Activated B cell treated with CpG ODN at 0.5 μM for 24 hours (primary cell): ENCODE measurements at regions of chr2 and their contacts with region 1.

Region 1: DNA sequence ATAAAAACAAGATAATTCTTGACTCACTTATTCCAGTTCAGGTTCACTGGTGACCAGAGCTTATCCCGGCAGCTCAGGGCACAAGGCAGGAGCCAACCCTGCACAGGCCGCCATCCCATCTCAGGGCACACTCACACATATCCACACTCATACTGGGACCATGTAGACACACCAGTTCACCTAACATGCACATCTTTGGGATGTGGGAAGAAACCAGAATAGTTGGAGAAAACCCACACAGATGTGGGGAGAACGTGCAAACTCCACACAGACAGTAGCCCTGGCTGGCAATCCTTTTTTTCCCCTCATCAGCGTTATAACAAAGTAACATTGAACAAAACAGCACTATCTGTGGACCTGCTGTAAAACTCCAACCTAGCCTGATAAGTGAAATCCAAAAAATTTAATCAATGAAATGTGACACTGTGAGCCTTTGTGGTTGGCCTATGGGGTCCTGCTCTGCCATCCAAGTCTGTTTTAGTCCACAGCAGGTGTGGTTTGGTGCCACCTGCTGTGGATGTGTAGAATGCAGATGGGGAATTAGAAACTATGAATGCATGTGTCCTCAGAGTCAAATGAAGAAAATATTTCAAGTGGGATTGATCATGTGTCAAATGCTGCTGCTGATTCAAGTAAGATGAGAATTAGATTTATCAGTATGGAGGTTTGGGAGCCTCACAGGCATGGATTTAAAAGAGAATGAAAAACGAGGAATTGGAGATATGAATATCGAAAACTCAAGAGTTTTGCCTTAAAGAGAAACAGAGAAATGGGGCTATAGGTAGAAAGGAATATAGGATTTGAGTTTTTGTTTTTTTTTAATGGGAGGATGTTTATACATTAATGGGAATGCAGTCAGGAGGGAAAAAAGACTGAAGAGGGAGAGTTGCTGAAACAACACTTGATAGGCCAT is 47.0 kb downstream of the UGP2 start:
- DNase-seq: no peak
- ATAC-seq: peak; percentile 69
- H3K4me3 Mint-ChIP-seq: no peak overlapping the region
- H3K27ac Mint-ChIP-seq: no peak overlapping the region
- H3K4me1 Mint-ChIP-seq: no peaks in the 10 kb centered on the region
- H3K27me3 Mint-ChIP-seq: no peaks in the 10 kb centered on the region
- CTCF ChIP-seq: no peak

Region 2: DNA sequence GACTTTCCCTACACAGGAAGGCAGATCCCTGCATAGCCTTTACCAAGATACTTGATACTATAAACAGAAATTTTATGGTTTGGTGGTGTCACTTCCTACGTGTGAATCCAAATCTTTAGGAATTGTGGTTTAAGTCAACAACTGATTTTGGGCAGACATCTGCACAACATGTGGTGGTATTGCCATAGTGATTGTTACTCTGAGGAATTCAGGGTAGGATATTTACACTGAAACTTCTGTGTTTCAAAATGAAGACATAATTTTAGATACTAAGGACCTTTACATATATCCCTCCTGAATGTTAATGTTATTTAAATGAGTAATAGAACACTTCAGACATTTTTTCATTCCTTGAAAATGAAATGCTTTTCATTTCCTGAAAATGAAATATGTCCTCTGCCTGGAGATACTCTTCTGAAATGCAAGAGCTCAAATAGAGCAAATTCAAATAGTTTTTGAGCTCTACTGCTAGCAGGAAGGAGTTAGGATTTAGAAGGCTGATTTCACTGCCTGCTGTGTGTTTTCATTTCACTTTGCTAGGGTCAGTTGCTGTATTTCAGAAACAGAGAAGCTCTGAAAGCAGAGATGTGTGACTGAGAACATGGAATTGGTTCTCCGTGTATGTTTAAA is 222.8 kb before region 1 on chr2:
- CTCF ChIA-PET with region 1: no interaction called
- POLR2A ChIA-PET with region 1: no interaction called
- intact Hi-C with region 1: no loop called
- DNase-seq: no peak
- ATAC-seq: no peak
- H3K4me3 Mint-ChIP-seq: no peak overlapping the region
- H3K27ac Mint-ChIP-seq: no peak overlapping the region
- H3K4me1 Mint-ChIP-seq: no peaks in the 10 kb centered on the region
- H3K27me3 Mint-ChIP-seq: peaks cover 6% of the 10 kb centered on the region
- CTCF ChIP-seq: no peak

Region 3: GRCh38 chr2:63692002-63692606 is 196.6 kb before region 1 on chr2:
- CTCF ChIA-PET with region 1: interaction called, 3 read pairs
- POLR2A ChIA-PET with region 1: no interaction called
- intact Hi-C with region 1: loop called (anchors 1 kb)
- DNase-seq: no peak
- ATAC-seq: peak; percentile 18
- H3K4me3 Mint-ChIP-seq: no peak overlapping the region
- H3K27ac Mint-ChIP-seq: no peak overlapping the region
- H3K4me1 Mint-ChIP-seq: no peaks in the 10 kb centered on the region
- H3K27me3 Mint-ChIP-seq: no peaks in the 10 kb centered on the region
- CTCF ChIP-seq: peak; percentile 53